PC-9 (cell line): ENCODE measurements at regions of chr22 and their contacts with region 1.

Region 1: DNA sequence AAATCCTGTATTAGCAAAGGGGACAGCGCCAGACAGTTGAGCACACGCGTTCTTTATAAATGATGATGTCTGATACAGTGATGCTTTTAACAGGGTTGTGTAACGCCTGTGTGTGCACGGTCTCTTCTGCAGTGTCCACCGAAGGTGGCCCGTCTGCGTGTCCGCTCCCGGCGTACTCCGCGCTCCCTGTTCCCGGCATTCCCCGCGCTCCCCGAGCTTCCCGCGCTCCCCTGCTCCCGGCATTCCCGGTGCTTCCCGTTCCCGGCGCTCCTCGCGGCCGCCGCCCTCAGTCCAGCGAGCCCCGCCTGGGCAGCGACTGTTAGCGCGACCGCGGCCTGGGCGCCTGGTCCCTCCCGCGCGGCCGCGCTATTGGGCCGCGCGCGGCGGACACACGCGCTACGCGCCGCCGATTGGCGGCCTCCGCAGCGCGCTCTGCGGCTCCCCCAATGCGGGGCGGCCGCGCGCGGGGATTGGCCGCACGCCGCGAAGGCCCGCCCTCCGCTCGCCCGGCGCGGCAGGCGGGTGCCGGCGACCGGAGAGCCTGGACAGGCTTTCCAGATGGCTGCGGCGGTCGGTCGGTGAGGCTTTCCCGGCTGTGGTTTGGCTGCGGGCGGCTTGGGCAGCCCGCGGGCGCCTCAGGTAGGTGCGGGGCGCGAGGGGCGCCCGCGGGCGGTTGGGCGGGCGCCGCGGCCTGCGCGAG is at the start of gene DGCR8:
- DNase-seq: peak; percentile 65 to 89
- H3K4me3 ChIP-seq: peak within 1 kb of the TSS; percentile 91
- H3K27ac ChIP-seq: peak within 1 kb of the TSS; percentile 61
- H3K4me1 ChIP-seq: peaks cover 4% of the 10 kb centered on the region; the same call in 1 of the 2 replicates
- H3K27me3 ChIP-seq: no peaks in the 10 kb centered on the region
- CTCF ChIP-seq: no peak
- total RNA-seq, gene DGCR8: 31.9 and 34.7 TPM in 2 replicates

Region 2: GRCh38 chr22:19419464-19420178 is 660.3 kb before region 1 on chr22:
- CTCF ChIA-PET with region 1: no interaction called
- POLR2A ChIA-PET with region 1: no interaction called
- intact Hi-C with region 1: no loop called
- DNase-seq: no peak
- H3K4me3 ChIP-seq: no peak overlapping the region
- H3K27ac ChIP-seq: no peak overlapping the region
- H3K4me1 ChIP-seq: no peaks in the 10 kb centered on the region
- H3K27me3 ChIP-seq: no peaks in the 10 kb centered on the region
- CTCF ChIP-seq: no peak

Region 3: DNA sequence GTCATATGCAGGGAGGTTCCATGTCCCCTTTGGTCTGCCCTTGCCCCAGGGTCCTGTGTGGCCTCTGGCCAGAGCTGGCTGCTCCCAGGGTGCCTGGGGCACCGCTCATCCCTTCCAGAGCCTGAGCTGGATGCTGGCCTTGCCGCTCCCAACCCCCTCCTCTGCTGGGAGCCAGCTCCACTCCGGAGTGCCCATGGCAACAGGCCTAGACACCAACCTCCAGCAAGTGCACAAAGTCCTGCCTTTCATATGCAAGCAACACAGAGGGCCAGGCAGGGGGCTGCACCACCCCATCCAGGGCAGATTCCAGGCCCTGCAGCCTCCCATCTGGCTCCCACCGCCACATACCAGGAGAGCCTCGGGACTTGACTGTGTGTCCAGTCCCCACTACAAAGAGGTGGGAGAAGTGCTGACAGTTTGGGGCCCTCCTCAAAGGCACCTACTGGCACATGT is 79.7 kb before region 1 on chr22:
- CTCF ChIA-PET with region 1: no interaction called
- POLR2A ChIA-PET with region 1: no interaction called
- intact Hi-C with region 1: no loop called
- DNase-seq: no peak
- H3K4me3 ChIP-seq: no peak overlapping the region
- H3K27ac ChIP-seq: no peak overlapping the region
- H3K4me1 ChIP-seq: no peaks in the 10 kb centered on the region
- H3K27me3 ChIP-seq: no peaks in the 10 kb centered on the region
- CTCF ChIP-seq: no peak

Region 4: DNA sequence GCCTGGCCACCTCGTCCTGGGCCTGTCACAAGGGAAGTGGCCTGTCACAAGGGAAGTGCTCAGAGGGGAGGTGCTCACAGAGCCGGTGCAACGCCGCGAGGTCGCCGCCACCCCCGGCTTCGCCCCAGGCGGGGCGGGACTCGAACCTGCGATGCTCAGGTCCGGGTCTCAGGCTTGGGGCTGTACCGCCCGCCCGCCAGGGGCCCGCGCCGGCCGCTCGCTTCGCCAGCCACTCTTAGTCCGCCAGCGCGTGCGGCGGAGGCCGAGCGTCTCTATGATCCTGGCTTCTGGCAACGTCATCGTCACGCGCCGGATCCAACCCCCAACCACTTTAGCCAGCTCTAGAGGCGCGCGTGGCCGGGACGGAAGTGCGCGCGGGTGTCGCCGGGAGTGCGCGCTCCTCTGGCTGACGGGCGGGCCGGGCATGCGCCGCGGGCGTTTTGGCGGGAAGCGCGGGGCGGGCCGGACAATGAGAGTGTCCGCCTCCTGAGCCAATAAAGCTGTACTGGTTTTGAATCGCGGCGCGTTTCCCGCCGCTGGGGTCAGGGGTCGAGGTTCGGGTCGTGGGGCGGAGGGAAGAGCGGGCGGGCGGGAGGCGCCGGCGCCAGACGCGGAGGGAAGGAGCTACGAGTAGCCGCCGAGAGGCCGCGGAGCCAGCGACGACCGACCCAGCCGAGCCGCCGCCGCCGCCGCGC is 37.2 kb after region 1 on chr22 and contains the start of gene TRMT2A:
- CTCF ChIA-PET with region 1: no interaction called
- POLR2A ChIA-PET with region 1: no interaction called
- intact Hi-C with region 1: loop called (anchors 2 kb)
- DNase-seq: peak; percentile 80 to 95
- H3K4me3 ChIP-seq: peak within 1 kb of the TSS; percentile 75
- H3K27ac ChIP-seq: 0 out of 2 replicates have a peak within 1 kb of the TSS, but pooled peaks have one; percentile 28
- H3K4me1 ChIP-seq: peaks cover 9% of the 10 kb centered on the region; the same call in 1 of the 2 replicates
- H3K27me3 ChIP-seq: no peaks in the 10 kb centered on the region
- CTCF ChIP-seq: no peak
- total RNA-seq, gene TRMT2A: 31.5 and 32.7 TPM in 2 replicates